ENCODE measurements at regions of chr1 and their contacts with region 1.

Region 1: DNA sequence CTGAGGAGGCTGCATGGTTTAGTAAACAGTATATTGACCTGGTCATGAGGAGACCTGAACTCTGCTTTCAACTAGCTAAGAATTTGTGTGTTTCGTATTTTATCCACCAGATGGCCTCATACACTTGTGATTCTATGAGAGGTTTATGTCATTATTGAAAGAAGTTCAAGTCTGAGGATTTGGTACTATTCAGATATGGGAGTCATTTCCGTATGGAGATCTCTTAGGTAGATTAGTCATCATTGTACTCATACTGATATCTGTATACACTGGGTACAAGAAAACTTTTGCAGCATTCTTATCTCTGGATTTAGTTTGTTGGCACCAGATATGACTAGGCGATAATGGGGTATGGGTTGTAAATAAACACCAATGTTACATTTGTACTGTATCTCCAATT is 26.6 kb downstream of the ATF6 start:
- DNase-seq: peak; percentile 32
- H3K4me3 ChIP-seq: no peak overlapping the region
- H3K27me3 ChIP-seq: no peaks in the 10 kb centered on the region
- CTCF ChIP-seq: peak; percentile 51

Region 2: GRCh38 chr1:161864577-161864976 is 71.8 kb after region 1 on chr1:
- CTCF ChIA-PET with region 1: interaction called, 13 read pairs
- POLR2A ChIA-PET with region 1: no interaction called
- DNase-seq: no peak
- H3K4me3 ChIP-seq: no peak overlapping the region
- H3K27me3 ChIP-seq: no peaks in the 10 kb centered on the region
- CTCF ChIP-seq: peak; percentile 55

Region 3: DNA sequence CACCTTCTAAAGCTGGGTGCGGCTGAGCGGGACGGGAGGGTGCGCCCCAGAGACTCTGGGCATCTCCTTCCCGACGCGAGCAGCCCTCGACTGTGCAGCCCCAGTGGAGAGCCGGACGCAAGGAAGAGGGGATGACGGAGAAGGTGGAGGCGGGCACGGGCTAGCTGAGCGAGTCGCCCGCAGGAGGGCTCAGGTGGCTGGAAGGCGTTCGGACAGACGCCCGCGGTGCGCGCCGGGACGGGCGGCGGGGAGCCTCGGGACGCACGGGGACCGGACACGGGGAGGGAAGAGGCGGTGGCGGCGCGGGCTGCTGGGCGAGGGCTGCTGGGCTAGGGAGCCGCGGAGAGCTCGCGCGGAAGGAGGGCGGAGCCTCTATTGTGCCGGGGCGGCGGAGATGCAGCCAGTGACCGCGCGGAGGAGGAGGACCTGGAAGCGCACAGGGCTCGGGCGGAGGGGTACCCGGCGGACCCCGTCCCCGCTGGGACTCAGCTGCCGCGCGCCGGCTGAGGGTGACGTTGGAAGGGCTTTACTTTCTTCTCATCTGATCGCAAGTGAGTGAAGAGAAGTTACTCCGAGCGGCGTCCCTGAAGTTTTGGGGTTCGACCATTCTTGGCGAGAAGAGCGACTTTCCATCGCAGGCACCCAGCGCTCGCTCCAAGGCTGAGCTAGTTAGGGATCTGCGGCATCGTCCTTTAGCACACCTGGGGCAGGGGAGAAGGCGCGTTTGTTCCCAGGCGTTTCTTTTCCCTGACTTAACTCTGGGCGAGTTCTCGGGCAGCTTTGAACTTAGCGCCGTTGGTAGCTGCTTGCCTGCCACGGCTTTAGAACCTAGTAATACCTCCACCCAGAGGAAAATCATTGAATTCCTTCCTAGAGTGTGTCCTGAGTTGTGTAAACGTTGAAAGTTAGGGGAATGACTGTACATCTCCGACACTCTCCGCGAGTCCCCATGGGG is 231.1 kb after region 1 on chr1 and contains the start of gene OLFML2B:
- CTCF ChIA-PET with region 1: interaction called, 33 read pairs
- POLR2A ChIA-PET with region 1: no interaction called
- DNase-seq: peak; percentile 55
- H3K4me3 ChIP-seq: peak within 1 kb of the TSS; percentile 53
- H3K27me3 ChIP-seq: no peaks in the 10 kb centered on the region; the same call in 1 of the 2 replicates
- CTCF ChIP-seq: peak; percentile 51
- polyA plus RNA-seq, gene OLFML2B: 1.6 and 3.5 TPM in 2 replicates

Region 4: GRCh38 chr1:162035241-162035640 is 242.5 kb after region 1 on chr1:
- CTCF ChIA-PET with region 1: interaction called, 187 read pairs
- POLR2A ChIA-PET with region 1: interaction called, 15 read pairs
- DNase-seq: no peak
- H3K4me3 ChIP-seq: no peak overlapping the region
- H3K27me3 ChIP-seq: peaks cover 2% of the 10 kb centered on the region
- CTCF ChIP-seq: no peak

Region 5: DNA sequence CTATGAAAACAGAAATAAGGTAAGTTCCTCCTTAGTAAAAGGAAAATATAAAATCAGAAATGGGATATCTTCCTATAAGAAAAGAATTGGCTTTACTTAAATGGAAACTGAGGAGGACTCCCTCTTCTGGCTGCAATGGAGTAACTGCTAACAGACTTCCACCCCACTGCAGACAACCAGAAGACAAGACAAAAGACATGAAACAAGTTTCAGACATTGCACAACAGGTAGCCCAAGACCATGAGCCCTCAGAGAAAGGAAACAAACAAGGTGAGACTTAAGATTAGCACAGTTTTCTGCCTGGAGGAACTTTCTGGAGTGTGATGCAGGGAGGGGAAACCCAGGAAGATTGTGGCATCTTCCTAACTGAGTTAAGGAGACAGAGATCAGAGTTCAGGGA is 247.9 kb after region 1 on chr1:
- CTCF ChIA-PET with region 1: interaction called, 187 read pairs
- POLR2A ChIA-PET with region 1: interaction called, 15 read pairs
- DNase-seq: no peak
- H3K4me3 ChIP-seq: no peak overlapping the region
- H3K27me3 ChIP-seq: no peaks in the 10 kb centered on the region
- CTCF ChIP-seq: peak; percentile 70

Region 6: DNA sequence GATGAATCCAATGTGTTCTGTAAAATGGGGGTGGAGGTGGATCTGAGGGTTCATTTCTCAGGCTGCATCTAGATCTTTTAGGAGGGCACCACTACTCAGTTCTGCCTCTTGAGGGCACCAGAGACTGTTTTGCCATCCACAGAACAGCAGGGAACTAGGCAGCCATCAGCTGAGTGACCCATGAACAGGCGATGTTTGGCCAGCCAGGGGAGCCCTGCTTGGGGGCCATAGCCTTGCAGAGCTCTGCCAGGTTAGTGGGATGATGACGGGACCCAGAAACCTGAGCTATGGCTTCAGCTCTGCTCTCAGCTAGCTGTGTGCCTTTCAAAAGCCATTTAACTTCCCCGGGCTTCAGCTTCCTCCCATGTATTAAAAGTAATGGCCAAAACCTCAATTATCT is 263.3 kb after region 1 on chr1:
- CTCF ChIA-PET with region 1: interaction called, 12 read pairs
- POLR2A ChIA-PET with region 1: no interaction called
- DNase-seq: no peak
- H3K4me3 ChIP-seq: no peak overlapping the region
- H3K27me3 ChIP-seq: peaks cover 3% of the 10 kb centered on the region; the same call in 1 of the 2 replicates
- CTCF ChIP-seq: peak; percentile 95